ENCODE measurements at regions of chr5 and their contacts with region 1.

Region 1: DNA sequence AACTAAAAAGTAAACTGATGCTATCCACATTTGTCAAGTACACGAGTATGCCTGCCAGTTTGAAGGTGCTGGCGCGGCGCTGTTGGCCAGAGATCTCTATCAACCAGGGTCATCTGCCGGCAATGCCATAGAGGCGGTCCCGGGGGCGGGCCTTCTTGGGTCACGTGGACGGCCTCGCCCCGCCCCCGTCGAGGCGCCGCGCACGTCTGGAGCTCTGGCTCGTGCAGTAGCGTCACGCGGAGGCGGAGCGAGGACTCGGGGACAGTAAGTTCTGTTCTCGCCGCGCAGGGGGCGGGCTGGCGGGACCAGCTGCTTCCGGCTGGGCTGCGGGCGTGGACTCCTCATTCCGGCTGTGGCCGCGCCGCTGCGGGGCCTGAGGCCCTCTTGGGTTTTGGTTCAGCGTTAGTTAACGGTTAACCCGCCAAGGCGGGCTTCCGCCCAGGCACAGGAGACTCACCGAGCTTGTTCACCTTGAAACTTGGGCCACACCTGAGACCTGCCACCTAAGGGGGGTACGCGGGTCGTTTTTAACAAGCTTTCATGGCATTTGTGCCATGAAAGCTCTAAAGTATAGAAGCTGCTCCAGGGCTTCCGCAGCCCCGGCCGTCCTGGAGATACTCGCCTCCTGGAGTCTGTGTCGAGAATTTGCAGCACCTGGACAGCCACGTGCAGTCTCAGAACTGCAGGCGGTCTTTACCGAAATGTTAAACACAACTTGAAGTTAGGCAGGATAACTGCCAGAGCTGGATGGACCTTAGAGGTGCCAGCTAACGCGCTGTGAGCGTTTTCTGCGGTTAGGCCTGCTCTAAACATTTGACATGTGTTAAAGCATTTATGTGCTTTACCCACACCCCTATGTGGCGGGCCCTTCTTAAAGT is at the start of gene RFESD:
- DNase-seq: peak; percentile 94
- H3K4me3 Mint-ChIP-seq: peak within 1 kb of the TSS; percentile 71
- H3K27ac Mint-ChIP-seq: peak within 1 kb of the TSS; percentile 76
- H3K4me1 Mint-ChIP-seq: peaks cover 30% of the 10 kb centered on the region
- H3K27me3 Mint-ChIP-seq: no peaks in the 10 kb centered on the region
- total RNA-seq, gene RFESD: 0.94 and 2.9 TPM in 2 replicates

Region 2: GRCh38 chr5:95554647-95555548 is 91.9 kb before region 1 on chr5 and contains the starts of genes ARSK and SKIC3:
- intact Hi-C with region 1: loop called (anchors 1 kb)
- DNase-seq: peak; percentile 93
- H3K4me3 Mint-ChIP-seq: peak within 1 kb of the TSS; percentile 93
- H3K27ac Mint-ChIP-seq: peak within 1 kb of the TSS; percentile 81
- H3K4me1 Mint-ChIP-seq: peaks cover 39% of the 10 kb centered on the region
- H3K27me3 Mint-ChIP-seq: no peaks in the 10 kb centered on the region
- total RNA-seq, gene ARSK: 4.0 and 4.6 TPM in 2 replicates
- total RNA-seq, gene SKIC3: 60.2 and 61.6 TPM in 2 replicates

Region 3: DNA sequence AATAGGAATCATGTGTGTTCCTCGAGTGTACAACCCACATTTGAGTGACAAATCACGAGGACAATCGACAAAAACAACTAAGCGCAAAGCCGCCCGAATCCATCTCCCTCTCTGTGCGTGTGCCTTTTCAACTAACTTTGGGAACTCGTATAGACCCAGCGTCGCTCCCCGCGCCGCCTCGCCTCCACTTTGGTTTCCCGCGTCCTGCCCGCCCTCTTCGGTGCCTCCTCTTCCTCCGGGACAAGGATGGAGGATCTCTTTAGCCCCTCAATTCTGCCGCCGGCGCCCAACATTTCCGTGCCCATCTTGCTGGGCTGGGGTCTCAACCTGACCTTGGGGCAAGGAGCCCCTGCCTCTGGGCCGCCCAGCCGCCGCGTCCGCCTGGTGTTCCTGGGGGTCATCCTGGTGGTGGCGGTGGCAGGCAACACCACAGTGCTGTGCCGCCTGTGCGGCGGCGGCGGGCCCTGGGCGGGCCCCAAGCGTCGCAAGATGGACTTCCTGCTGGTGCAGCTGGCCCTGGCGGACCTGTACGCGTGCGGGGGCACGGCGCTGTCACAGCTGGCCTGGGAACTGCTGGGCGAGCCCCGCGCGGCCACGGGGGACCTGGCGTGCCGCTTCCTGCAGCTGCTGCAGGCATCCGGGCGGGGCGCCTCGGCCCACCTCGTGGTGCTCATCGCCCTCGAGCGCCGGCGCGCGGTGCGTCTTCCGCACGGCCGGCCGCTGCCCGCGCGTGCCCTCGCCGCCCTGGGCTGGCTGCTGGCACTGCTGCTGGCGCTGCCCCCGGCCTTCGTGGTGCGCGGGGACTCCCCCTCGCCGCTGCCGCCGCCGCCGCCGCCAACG is 26.5 kb before region 1 on chr5 and contains the start of gene GPR150:
- intact Hi-C with region 1: loop called (anchors 1 kb)
- DNase-seq: peak; percentile 50
- H3K4me3 Mint-ChIP-seq: peak within 1 kb of the TSS; percentile 81
- H3K27ac Mint-ChIP-seq: peak within 1 kb of the TSS; percentile 84
- H3K4me1 Mint-ChIP-seq: peaks cover 31% of the 10 kb centered on the region
- H3K27me3 Mint-ChIP-seq: peaks cover 18% of the 10 kb centered on the region
- total RNA-seq, gene GPR150: 0.11 and 0.14 TPM in 2 replicates

Region 4: GRCh38 chr5:95686651-95687050 is 39.9 kb after region 1 on chr5:
- intact Hi-C with region 1: no loop called
- DNase-seq: no peak
- H3K4me3 Mint-ChIP-seq: no peak overlapping the region
- H3K27ac Mint-ChIP-seq: no peak overlapping the region
- H3K4me1 Mint-ChIP-seq: no peaks in the 10 kb centered on the region
- H3K27me3 Mint-ChIP-seq: peaks cover 41% of the 10 kb centered on the region

Region 5: DNA sequence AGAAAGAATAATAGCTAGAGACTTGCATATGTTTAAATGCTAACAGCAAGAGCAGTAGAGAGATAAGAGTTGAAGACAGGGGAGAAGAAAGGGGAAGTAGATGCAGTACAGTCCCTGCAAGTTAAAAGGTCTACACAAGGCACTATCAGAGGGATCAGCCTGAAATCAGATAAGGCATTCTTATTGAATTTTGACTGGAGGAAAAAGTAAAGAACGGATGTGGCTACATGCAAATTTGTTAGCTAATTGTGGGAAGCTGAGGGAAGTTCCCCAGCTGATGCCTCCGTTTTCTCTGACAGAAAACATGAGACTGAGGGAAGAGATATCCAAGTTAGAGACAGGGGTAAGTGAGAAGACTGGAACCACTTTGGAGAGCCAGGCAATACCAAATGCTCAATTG is 71.4 kb after region 1 on chr5:
- intact Hi-C with region 1: loop called (anchors 1 kb)
- DNase-seq: peak; percentile 21
- H3K4me3 Mint-ChIP-seq: no peak overlapping the region
- H3K27ac Mint-ChIP-seq: no peak overlapping the region
- H3K4me1 Mint-ChIP-seq: peaks cover 19% of the 10 kb centered on the region
- H3K27me3 Mint-ChIP-seq: peaks cover 31% of the 10 kb centered on the region

Region 6: DNA sequence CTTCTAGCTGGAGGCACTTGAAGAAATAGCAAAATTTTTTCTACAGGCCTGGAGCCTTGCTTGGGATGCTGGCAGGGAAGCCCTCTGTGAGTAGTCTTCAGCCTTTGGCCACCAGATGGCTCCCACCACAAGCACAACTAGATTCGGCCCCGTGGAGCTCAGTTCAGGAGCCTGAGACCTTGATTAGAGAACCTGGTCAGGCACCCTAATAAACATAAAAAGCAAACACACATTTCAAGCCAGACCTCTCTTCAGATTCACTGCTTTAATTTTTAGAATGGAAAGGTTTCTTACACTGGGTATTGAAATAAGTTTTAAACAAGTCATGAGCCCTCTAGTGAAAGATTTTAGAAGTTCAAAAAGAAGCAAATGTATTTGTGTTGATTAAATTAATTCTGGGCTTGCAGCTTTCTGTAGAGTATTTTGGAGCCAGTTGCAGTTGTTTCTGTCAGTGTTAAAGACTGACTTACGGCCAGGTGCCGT is 134.3 kb after region 1 on chr5:
- intact Hi-C with region 1: loop called (anchors 2 kb)
- DNase-seq: peak; percentile 52
- H3K4me3 Mint-ChIP-seq: peak overlapping the region; percentile 41
- H3K27ac Mint-ChIP-seq: no peak overlapping the region
- H3K4me1 Mint-ChIP-seq: peaks cover 19% of the 10 kb centered on the region
- H3K27me3 Mint-ChIP-seq: peaks cover 7% of the 10 kb centered on the region

Region 7: DNA sequence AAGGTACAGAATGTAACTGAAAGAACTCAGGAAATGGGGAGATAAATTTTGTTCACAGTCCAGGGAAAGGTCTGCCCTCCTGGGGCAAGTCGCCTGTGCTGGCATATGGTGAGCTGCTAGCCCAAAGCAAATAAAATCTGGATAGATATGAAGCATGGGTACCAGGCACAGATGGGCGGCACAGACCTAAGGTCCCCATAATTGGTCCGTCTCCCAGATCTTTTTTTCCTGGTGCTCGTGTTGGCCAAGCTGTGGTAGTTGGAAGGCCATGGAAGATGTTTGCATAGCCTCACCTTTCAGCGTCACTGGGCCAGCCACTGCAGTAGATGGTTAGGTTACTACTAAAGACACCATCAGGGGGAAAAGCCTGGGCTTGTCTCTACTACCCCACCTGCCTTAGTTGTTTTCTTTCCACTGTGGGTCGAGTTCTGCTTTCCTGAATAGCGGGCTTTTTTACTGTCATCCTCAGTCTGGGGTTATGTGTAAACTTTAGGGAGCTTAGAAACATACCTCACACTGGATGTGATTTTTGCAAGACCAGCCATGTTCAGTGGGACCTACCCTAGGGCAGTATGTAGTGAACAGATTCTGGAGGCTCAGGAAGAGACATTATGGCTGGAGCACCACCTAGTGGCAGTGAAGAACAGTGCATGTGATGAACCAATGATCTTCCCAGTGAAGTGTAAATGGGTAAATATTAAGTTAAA is 199.9 kb after region 1 on chr5:
- intact Hi-C with region 1: loop called (anchors 1 kb)
- DNase-seq: peak; percentile 47
- H3K4me3 Mint-ChIP-seq: no peak overlapping the region
- H3K27ac Mint-ChIP-seq: no peak overlapping the region
- H3K4me1 Mint-ChIP-seq: peaks cover 26% of the 10 kb centered on the region
- H3K27me3 Mint-ChIP-seq: peaks cover 6% of the 10 kb centered on the region

Region 8: DNA sequence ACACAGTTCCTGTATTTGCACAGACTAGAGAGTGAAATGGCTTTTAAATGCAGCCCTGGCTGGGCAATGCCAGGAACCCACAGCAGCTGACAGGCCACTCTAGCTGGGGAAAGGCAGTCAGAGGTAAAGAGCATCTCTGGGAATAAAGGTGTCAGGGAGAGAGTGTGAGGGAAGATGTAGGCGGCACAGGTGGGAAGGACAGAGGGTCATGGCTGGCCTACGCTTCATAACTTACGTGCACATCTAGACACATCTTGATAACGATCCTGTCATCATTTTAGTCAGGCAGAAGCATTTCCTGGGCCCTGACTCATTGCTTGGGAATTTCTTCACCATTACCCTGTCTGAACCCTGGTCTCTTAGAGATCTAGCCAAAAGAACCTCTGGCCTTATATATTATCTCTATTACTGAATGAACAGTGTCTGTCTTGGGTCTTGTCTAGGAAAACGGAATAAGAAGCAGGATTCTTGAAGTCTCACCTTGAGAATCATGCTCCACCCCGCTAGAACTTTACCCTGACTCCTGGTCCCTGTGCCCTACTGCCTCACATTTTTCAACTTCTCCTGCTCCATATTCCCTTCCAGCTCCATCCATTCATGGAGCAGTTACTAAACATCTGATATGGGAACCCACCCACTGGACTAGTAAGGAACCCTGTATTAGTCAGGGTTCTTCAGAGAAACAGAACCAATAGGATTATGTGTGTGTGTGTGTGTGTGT is 421.3 kb after region 1 on chr5:
- intact Hi-C with region 1: loop called (anchors 10 kb)
- DNase-seq: no peak
- H3K4me3 Mint-ChIP-seq: peak overlapping the region; percentile 19
- H3K27ac Mint-ChIP-seq: peak overlapping the region; percentile 91
- H3K4me1 Mint-ChIP-seq: peaks cover 74% of the 10 kb centered on the region
- H3K27me3 Mint-ChIP-seq: no peaks in the 10 kb centered on the region